Activated CD4-positive, alpha-beta memory T cell treated with anti-CD3 and anti-CD28 coated beads, Interleukin-2, amount 10 ng/mL, durations not matched to agents 7 days and 5 days (primary cell): ENCODE measurements at regions of chr11 and their contacts with region 1.

Region 1: GRCh38 chr11:67265633-67266423 is 445 bp upstream of the GRK2 start:
- DNase-seq: peak; percentile 81
- H3K4me3 Mint-ChIP-seq: peak overlapping the region; percentile 76
- H3K27ac Mint-ChIP-seq: peak overlapping the region; percentile 80
- H3K4me1 Mint-ChIP-seq: peaks cover 67% of the 10 kb centered on the region
- H3K27me3 Mint-ChIP-seq: no peaks in the 10 kb centered on the region

Region 2: DNA sequence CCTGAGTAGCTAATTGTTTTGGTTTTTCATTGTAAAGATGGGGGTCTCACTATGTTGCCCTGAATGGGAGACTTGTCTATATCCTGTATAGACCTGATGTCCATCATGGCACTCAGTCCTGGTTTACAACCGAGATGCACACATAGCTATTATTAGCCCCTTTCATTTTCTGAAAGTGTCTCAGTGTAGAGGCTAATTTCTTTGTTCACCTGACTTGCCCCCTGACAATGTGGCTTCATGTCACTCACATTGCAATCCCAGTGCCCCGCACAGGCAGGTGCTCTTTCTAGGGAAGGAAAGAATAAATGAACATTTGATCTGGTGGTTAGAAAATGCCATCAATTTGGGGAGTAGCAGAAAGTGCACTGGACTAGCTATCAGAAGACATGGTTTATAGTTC is 159.9 kb before region 1 on chr11:
- CTCF ChIA-PET with region 1: no interaction called
- POLR2A ChIA-PET with region 1: no interaction called
- DNase-seq: no peak
- H3K4me3 Mint-ChIP-seq: no peak overlapping the region
- H3K27ac Mint-ChIP-seq: no peak overlapping the region
- H3K4me1 Mint-ChIP-seq: peaks cover 10% of the 10 kb centered on the region
- H3K27me3 Mint-ChIP-seq: no peaks in the 10 kb centered on the region

Region 3: GRCh38 chr11:67239783-67240575 is 25.8 kb before region 1 on chr11:
- CTCF ChIA-PET with region 1: interaction called, 17 read pairs
- POLR2A ChIA-PET with region 1: interaction called, 36 read pairs
- DNase-seq: peak; percentile 97
- H3K4me3 Mint-ChIP-seq: peak overlapping the region; percentile 99
- H3K27ac Mint-ChIP-seq: peak overlapping the region; percentile 96
- H3K4me1 Mint-ChIP-seq: peaks cover 49% of the 10 kb centered on the region
- H3K27me3 Mint-ChIP-seq: no peaks in the 10 kb centered on the region

Region 4: GRCh38 chr11:67277231-67277961 is 11.6 kb after region 1 on chr11:
- CTCF ChIA-PET with region 1: interaction called, 19 read pairs
- POLR2A ChIA-PET with region 1: interaction called, 494 read pairs
- DNase-seq: peak; percentile 94
- H3K4me3 Mint-ChIP-seq: peak overlapping the region; percentile 77
- H3K27ac Mint-ChIP-seq: peak overlapping the region; percentile 93
- H3K4me1 Mint-ChIP-seq: peaks cover 80% of the 10 kb centered on the region
- H3K27me3 Mint-ChIP-seq: no peaks in the 10 kb centered on the region

Region 5: GRCh38 chr11:67288452-67289225 is 22.8 kb after region 1 on chr11:
- CTCF ChIA-PET with region 1: interaction called, 21 read pairs
- POLR2A ChIA-PET with region 1: interaction called, 494 read pairs
- DNase-seq: peak; percentile 94
- H3K4me3 Mint-ChIP-seq: peak overlapping the region; percentile 74
- H3K27ac Mint-ChIP-seq: peak overlapping the region; percentile 99
- H3K4me1 Mint-ChIP-seq: peaks cover 76% of the 10 kb centered on the region
- H3K27me3 Mint-ChIP-seq: no peaks in the 10 kb centered on the region

Region 6: GRCh38 chr11:67317205-67317887 is 51.5 kb after region 1 on chr11:
- CTCF ChIA-PET with region 1: interaction called, 69 read pairs
- POLR2A ChIA-PET with region 1: interaction called, 50 read pairs
- DNase-seq: peak; percentile 99
- H3K4me3 Mint-ChIP-seq: peak overlapping the region; percentile 83
- H3K27ac Mint-ChIP-seq: peak overlapping the region; percentile 96
- H3K4me1 Mint-ChIP-seq: peaks cover 44% of the 10 kb centered on the region
- H3K27me3 Mint-ChIP-seq: no peaks in the 10 kb centered on the region

Region 7: GRCh38 chr11:67507864-67508485 is 242.1 kb after region 1 on chr11 and contains the start of gene CDK2AP2:
- CTCF ChIA-PET with region 1: no interaction called
- POLR2A ChIA-PET with region 1: no interaction called
- DNase-seq: peak; percentile 99
- H3K4me3 Mint-ChIP-seq: peak within 1 kb of the TSS; percentile 93
- H3K27ac Mint-ChIP-seq: peak within 1 kb of the TSS; percentile 90
- H3K4me1 Mint-ChIP-seq: peaks cover 41% of the 10 kb centered on the region
- H3K27me3 Mint-ChIP-seq: peaks cover 8% of the 10 kb centered on the region
- total RNA-seq, gene CDK2AP2: 116 to 119 TPM